ENCODE measurements at regions of chr18 and their contacts with region 1.

Region 1: GRCh38 chr18:32919799-32920198 is 147.0 kb upstream of the KLHL14 start:
- DNase-seq: peak; percentile 64 to 70
- H3K4me3 ChIP-seq: no peak overlapping the region
- H3K27ac ChIP-seq: no peak overlapping the region
- H3K4me1 ChIP-seq: no peaks in the 10 kb centered on the region
- H3K27me3 ChIP-seq: no peaks in the 10 kb centered on the region
- CTCF ChIP-seq: peak; percentile 37 to 98 (median 79)
- POLR2A ChIP-seq: no peak

Region 2: GRCh38 chr18:32576296-32576916 is 343.4 kb before region 1 on chr18:
- intact Hi-C with region 1: loop called (anchors 10 kb)
- DNase-seq: peak; percentile 55 to 57
- H3K4me3 ChIP-seq: no peak overlapping the region
- H3K27ac ChIP-seq: no peak overlapping the region
- H3K4me1 ChIP-seq: no peaks in the 10 kb centered on the region
- H3K27me3 ChIP-seq: no peaks in the 10 kb centered on the region
- CTCF ChIP-seq: peak in 4 of 6 experiments; percentile 5 to 52 (median 50)
- POLR2A ChIP-seq: no peak

Region 3: GRCh38 chr18:32714571-32715148 is 205.1 kb before region 1 on chr18:
- intact Hi-C with region 1: loop called (anchors 10 kb)
- DNase-seq: peak; percentile 57 to 63
- H3K4me3 ChIP-seq: no peak overlapping the region
- H3K27ac ChIP-seq: peak overlapping the region in 1 of 3 donors; percentile 14
- H3K4me1 ChIP-seq: peaks cover 0 to 3% of the 10 kb centered on the region in 2 donors
- H3K27me3 ChIP-seq: no peaks in the 10 kb centered on the region
- CTCF ChIP-seq: peak; percentile 60 to 96 (median 80)
- POLR2A ChIP-seq: no peak

Region 4: DNA sequence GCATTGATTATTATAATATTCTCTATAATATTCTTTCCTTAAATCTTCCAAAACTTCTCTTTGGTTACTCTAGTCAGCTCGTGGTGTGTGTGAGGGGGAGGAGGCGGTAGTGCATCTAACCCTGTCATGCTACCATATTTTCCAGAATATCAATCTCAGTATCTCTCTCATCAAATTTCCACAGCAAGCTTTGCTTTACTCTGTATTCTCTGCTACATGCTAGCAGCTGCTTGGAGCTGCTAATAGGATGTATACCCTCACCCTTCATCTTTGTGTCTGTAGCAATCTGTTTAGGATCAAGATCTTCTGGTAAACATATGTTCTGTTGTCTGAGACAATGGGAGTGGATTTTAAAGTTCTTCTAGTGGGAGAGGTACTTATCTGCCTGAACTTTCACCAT is 156.8 kb after region 1 on chr18:
- intact Hi-C with region 1: no loop called
- DNase-seq: no peak
- H3K4me3 ChIP-seq: no peak overlapping the region
- H3K27ac ChIP-seq: no peak overlapping the region
- H3K4me1 ChIP-seq: no peaks in the 10 kb centered on the region
- H3K27me3 ChIP-seq: no peaks in the 10 kb centered on the region
- CTCF ChIP-seq: no peak
- POLR2A ChIP-seq: no peak